ENCODE measurements at regions of chr6 and their contacts with region 1.

Region 1: GRCh38 chr6:116561377-116562018 is 7.9 kb downstream of the CALHM4 start:
- DNase-seq: peak; percentile 51
- H3K4me3 ChIP-seq: no peak overlapping the region
- H3K27ac ChIP-seq: no peak overlapping the region
- H3K27me3 ChIP-seq: no peaks in the 10 kb centered on the region
- CTCF ChIP-seq: peak; percentile 91

Region 2: GRCh38 chr6:116542426-116542825 is 19.1 kb before region 1 on chr6:
- CTCF ChIA-PET with region 1: interaction called, 27 read pairs
- POLR2A ChIA-PET with region 1: no interaction called
- DNase-seq: no peak
- H3K4me3 ChIP-seq: no peak overlapping the region
- H3K27ac ChIP-seq: no peak overlapping the region
- H3K27me3 ChIP-seq: no peaks in the 10 kb centered on the region
- CTCF ChIP-seq: no peak

Region 3: DNA sequence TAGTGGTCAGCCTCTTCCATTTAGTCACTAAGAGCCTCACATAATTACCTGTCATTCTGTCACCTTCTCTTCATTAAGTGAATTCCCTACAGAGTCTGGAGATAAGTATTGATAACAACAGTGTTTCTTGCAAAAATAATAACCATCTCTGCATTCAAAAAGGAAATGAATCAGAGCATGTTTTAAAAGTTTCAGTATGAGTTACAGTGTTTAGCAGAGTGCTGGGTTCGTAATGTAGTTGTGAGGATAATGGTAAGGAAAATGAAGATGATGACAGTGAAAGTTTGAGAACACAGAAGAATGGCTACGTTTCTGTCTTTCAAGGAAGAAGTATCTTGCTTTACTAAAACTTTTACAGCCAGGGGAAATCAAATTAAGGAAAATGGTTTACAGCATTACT is 236.1 kb after region 1 on chr6:
- CTCF ChIA-PET with region 1: no interaction called
- POLR2A ChIA-PET with region 1: no interaction called
- DNase-seq: no peak
- H3K4me3 ChIP-seq: no peak overlapping the region
- H3K27ac ChIP-seq: no peak overlapping the region
- H3K27me3 ChIP-seq: no peaks in the 10 kb centered on the region
- CTCF ChIP-seq: no peak